ENCODE measurements at regions of chr9 and their contacts with region 1.

Region 1: GRCh38 chr9:96441798-96442445 is 8.0 kb upstream of the HABP4 start:
- DNase-seq: peak; percentile 64 to 78 (median 73)
- H3K4me3 ChIP-seq: no peak overlapping the region
- H3K27ac ChIP-seq: no peak overlapping the region
- H3K4me1 ChIP-seq: no peaks in the 10 kb centered on the region
- H3K27me3 ChIP-seq: no peaks in the 10 kb centered on the region

Region 2: GRCh38 chr9:96423322-96423979 is 18.5 kb before region 1 on chr9:
- CTCF ChIA-PET with region 1: interaction called, 10 read pairs
- POLR2A ChIA-PET with region 1: no interaction called
- DNase-seq: no peak
- H3K4me3 ChIP-seq: no peak overlapping the region
- H3K27ac ChIP-seq: no peak overlapping the region
- H3K4me1 ChIP-seq: peaks cover 13 to 28% (median 19%) of the 10 kb centered on the region in 4 experiments
- H3K27me3 ChIP-seq: no peaks in the 10 kb centered on the region

Measured in common myeloid progenitor, CD34-positive (primary cell).